ENCODE measurements at regions of chr7 and their contacts with region 1.

Region 1: DNA sequence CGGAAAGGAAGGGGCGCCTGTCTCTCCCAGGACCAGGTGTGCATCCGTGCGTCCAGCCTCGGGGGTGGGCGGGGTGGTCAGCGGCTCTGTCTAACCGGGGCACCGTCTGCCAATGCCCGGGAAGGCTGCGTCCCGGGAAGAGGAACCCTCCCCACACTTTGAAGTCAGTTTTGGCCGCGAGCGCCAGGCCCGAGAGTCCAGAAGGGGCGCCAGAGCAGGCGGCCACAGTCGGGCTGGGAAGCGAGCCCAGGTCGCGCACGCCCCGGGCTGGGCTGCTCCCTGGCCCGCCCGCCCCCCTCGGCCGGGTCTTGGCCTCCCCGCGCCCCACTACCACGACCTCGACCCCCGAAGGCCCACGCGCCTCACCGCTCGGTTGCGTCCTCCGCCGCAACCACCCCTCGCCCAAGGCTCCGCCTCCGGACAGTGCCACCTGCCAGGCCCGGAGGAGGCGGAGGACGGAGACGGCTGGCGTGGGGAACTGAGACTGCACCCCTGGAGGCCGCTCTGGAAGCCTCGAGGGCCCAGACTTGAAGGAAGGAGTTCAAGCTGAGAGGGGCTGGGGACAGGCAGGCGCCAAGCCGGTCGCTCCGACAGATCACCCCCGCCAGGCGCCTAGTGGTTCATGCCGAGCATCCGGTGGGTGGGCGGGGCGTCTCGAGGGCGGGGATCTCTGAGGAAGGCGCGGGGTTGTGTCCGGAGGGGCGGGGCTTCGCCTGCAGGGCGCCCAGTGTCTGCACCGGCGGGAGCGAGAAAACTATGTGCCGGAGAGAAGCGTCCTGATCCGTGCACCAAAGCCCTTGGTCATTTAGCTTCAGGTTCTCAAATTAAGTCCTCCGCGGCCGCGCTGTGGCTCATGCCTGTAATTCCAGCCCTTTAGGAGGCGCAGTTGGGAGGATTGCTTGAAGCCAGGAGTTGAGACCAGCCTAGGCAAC is at the start of gene BRAT1:
- DNase-seq: peak; percentile 97
- H3K4me3 Mint-ChIP-seq: peak within 1 kb of the TSS; percentile 89
- H3K27ac Mint-ChIP-seq: peak within 1 kb of the TSS; percentile 91
- H3K4me1 Mint-ChIP-seq: peaks cover 40% of the 10 kb centered on the region
- H3K27me3 Mint-ChIP-seq: no peaks in the 10 kb centered on the region
- total RNA-seq, gene BRAT1: 33.5 to 33.6 TPM

Region 2: GRCh38 chr7:2477447-2478398 is 77.7 kb before region 1 on chr7:
- CTCF ChIA-PET with region 1: no interaction called
- POLR2A ChIA-PET with region 1: no interaction called
- intact Hi-C with region 1: loop called (anchors 5 kb)
- DNase-seq: peak; percentile 79
- H3K4me3 Mint-ChIP-seq: no peak overlapping the region
- H3K27ac Mint-ChIP-seq: no peak overlapping the region
- H3K4me1 Mint-ChIP-seq: no peaks in the 10 kb centered on the region
- H3K27me3 Mint-ChIP-seq: no peaks in the 10 kb centered on the region

Region 3: GRCh38 chr7:2529161-2530070 is 26.0 kb before region 1 on chr7:
- CTCF ChIA-PET with region 1: no interaction called
- POLR2A ChIA-PET with region 1: interaction called, 6 read pairs
- intact Hi-C with region 1: loop called (anchors 1 kb)
- DNase-seq: peak; percentile 78
- H3K4me3 Mint-ChIP-seq: peak overlapping the region; percentile 63
- H3K27ac Mint-ChIP-seq: peak overlapping the region; percentile 96
- H3K4me1 Mint-ChIP-seq: peaks cover 54% of the 10 kb centered on the region
- H3K27me3 Mint-ChIP-seq: no peaks in the 10 kb centered on the region

Region 4: DNA sequence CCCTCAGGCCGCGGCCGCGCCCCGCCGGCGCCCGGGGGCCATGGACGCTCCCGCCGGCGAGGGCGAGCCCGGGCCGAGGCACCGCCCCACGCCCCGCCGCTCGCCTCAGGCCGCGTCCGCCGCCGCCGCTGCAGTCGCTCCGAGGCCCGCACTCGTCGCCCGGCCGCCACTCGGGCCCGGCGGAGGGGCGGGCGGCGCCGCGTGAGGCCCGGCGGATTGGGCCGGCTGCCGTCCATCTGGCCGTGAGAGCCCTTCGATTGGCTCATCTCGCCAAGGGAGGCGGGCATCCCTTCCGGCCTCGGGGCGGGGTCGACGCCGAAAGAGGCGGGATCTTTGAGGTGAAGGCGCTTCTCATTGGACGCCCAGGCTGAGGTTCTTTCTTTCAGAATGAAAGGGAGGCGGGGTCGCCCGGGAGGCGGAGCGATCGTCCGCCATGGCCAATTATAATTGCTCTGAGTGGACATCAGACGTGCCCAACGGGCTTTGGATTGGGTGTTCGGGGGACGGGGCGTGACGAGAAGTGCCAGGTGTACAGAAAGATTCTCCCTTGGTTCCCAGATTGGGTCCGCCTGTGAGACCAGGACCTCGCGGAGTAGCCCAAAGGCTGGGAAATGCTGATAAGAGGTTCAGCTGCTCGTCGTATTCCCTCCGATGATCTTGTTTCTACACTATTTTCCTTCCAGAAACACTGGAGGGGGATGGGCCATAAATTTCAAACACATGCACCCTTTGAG is 288.9 kb after region 1 on chr7 and contains the start of gene GNA12:
- CTCF ChIA-PET with region 1: no interaction called
- POLR2A ChIA-PET with region 1: no interaction called
- intact Hi-C with region 1: loop called (anchors 5 kb)
- DNase-seq: peak; percentile 99
- H3K4me3 Mint-ChIP-seq: peak within 1 kb of the TSS; percentile 74
- H3K27ac Mint-ChIP-seq: peak within 1 kb of the TSS; percentile 42
- H3K4me1 Mint-ChIP-seq: peaks cover 42% of the 10 kb centered on the region
- H3K27me3 Mint-ChIP-seq: no peaks in the 10 kb centered on the region
- total RNA-seq, gene GNA12: 23.6 to 23.7 TPM